PC-9 (cell line): ENCODE measurements at regions of chr5 and their contacts with region 1.

Region 1: DNA sequence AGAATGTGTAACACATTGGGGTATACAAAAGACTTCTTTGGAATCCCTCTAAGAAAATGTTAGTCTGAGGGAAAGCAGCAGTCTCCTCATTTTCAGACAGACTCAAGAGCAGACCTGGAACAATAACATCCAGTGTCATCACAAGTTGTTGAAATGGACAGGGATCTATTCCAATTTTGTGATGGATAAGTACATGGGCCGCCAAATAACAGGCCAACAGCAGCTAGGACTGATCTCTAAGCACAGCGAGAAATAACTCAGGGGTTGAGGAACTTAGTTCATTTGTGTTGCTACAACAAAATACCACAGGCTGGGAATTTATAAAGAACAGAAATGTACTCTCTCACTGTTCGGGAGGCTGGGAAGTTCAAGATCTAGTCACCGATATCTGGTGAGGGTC is 7.6 kb upstream of the ITGA2 start:
- DNase-seq: no peak
- H3K4me3 ChIP-seq: no peak overlapping the region
- H3K27ac ChIP-seq: no peak overlapping the region
- H3K4me1 ChIP-seq: peaks cover 31% of the 10 kb centered on the region
- H3K27me3 ChIP-seq: no peaks in the 10 kb centered on the region
- CTCF ChIP-seq: no peak

Region 2: DNA sequence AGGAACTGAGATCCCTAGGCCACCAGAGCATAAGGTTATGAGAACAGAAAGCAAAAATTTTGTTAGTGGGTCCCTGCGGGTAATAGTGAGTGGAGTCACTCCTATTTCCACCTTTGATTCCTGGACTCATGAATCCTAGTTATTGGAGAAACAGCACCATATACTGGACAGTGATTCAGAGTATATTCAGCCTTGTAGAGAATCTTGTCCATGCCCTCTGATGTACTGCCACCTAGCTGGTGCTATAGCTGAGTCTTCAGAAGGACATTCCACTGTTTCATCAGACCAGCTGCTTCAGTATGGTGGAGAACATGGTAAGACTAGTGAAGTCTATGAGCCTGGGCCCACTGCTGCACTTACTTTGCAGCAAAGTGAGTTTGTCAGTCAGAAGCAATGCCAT is 17.4 kb before region 1 on chr5:
- CTCF ChIA-PET with region 1: no interaction called
- POLR2A ChIA-PET with region 1: interaction called, 26 read pairs
- intact Hi-C with region 1: no loop called
- DNase-seq: no peak
- H3K4me3 ChIP-seq: no peak overlapping the region
- H3K27ac ChIP-seq: peak overlapping the region; percentile 53
- H3K4me1 ChIP-seq: peaks cover 14% of the 10 kb centered on the region
- H3K27me3 ChIP-seq: no peaks in the 10 kb centered on the region
- CTCF ChIP-seq: no peak; the same call in 1 of the 2 replicates